Psoas muscle (tissue), 8 donors: ENCODE measurements at regions of chr2 and their contacts with region 1.

Region 1: DNA sequence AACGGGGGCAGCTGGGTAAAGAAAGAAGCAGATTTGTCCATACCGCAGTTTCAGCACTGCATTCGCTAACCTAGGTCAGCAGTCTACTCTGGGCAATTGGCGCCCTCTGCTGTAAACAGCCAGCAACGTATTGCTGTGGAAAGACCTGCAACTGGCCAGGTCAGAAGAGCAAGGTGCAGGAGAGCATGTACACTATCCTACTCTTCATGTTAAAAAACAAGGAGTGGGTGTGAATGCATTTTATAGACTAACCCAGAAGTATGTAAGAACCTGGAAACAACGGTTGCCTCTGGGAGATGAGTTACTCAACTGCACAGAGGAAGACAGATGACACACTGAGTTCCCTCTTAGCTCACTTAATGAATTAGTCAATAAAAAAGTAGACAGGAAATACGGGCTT is 6.2 kb downstream of the MRPS5 start:
- DNase-seq: peak; percentile 44 to 70
- ATAC-seq: peak; percentile 73 to 94 (median 93)
- H3K4me3 ChIP-seq: no peak overlapping the region
- H3K27ac ChIP-seq: no peak overlapping the region
- H3K4me1 ChIP-seq: peaks cover 23% of the 10 kb centered on the region
- H3K27me3 ChIP-seq: no peaks in the 10 kb centered on the region
- CTCF ChIP-seq: peak; percentile 74

Region 2: GRCh38 chr2:95022309-95023221 is 92.9 kb before region 1 on chr2:
- intact Hi-C with region 1: loop called in 1 of 2 experiments (anchors 2 kb)
- DNase-seq: peak; percentile 47 to 66
- ATAC-seq: peak; percentile 61 to 81 (median 79)
- H3K4me3 ChIP-seq: no peak overlapping the region
- H3K27ac ChIP-seq: no peak overlapping the region
- H3K4me1 ChIP-seq: peaks cover 4% of the 10 kb centered on the region
- H3K27me3 ChIP-seq: peaks cover 0 to 58% (median 20%) of the 10 kb centered on the region in 3 donors
- CTCF ChIP-seq: peak; percentile 80

Region 3: GRCh38 chr2:95076784-95077529 is 38.5 kb before region 1 on chr2:
- intact Hi-C with region 1: loop called in 1 of 2 experiments (anchors 5 kb)
- DNase-seq: peak; percentile 66 to 80
- ATAC-seq: peak; percentile 78 to 91 (median 84)
- H3K4me3 ChIP-seq: peak overlapping the region; percentile 68
- H3K27ac ChIP-seq: no peak overlapping the region
- H3K4me1 ChIP-seq: peaks cover 6% of the 10 kb centered on the region
- H3K27me3 ChIP-seq: peaks cover 0 to 29% (median 4%) of the 10 kb centered on the region in 3 donors
- CTCF ChIP-seq: peak; percentile 73